ENCODE measurements at regions of chr4 and their contacts with region 1.

Region 1: GRCh38 chr4:107757864-107758476 is 37.9 kb upstream of the PAPSS1 start:
- H3K4me3 ChIP-seq: no peak overlapping the region
- H3K27ac ChIP-seq: no peak overlapping the region
- H3K4me1 ChIP-seq: no peaks in the 10 kb centered on the region
- CTCF ChIP-seq: no peak

Region 2: GRCh38 chr4:107906458-107907100 is 148.6 kb after region 1 on chr4:
- CTCF ChIA-PET with region 1: interaction called, 48 read pairs
- POLR2A ChIA-PET with region 1: no interaction called
- H3K4me3 ChIP-seq: no peak overlapping the region
- H3K27ac ChIP-seq: no peak overlapping the region
- H3K4me1 ChIP-seq: no peaks in the 10 kb centered on the region
- CTCF ChIP-seq: no peak

Region 3: DNA sequence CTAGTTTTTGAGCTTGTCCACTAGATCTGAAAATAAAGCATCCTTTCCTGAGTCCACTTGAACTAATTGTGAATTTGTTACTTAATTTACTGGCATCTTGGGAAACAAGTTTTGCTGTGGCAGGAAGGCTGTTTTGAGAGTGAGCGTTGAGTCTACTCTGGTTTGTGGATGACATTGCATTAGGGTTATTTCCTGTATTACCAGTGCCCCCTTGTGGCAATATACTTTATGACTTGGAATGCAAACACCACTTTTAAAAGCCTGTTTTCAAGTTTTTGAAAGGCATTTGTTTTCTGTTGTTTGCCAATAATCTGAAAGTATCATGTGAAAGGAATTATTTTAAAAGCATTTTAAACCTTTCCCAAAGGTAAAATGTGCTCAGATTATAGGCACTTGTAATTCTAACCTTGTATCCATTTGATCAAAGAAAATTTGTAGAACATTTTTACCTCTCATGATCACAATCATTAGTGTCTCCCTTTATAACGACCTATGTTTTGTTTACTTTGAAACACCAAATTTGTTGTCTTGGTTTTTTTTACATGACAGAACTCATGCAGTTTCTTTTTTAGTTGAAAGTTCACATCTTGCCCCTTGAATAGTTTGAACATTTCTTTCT is 155.4 kb after region 1 on chr4:
- CTCF ChIA-PET with region 1: interaction called, 48 read pairs
- POLR2A ChIA-PET with region 1: no interaction called
- H3K4me3 ChIP-seq: no peak overlapping the region
- H3K27ac ChIP-seq: no peak overlapping the region
- H3K4me1 ChIP-seq: no peaks in the 10 kb centered on the region
- CTCF ChIP-seq: peak; percentile 39; the same call in 1 of the 2 replicates

Measured in HEK293 (cell line).